Vagina (tissue), 2 donors: ENCODE measurements at regions of chr16 and their contacts with region 1.

Region 1: GRCh38 chr16:23435500-23435899 is 17.5 kb downstream of the COG7 start:
- DNase-seq: no peak
- H3K4me3 ChIP-seq: no peak overlapping the region
- H3K27ac ChIP-seq: no peak overlapping the region
- H3K4me1 ChIP-seq: peaks cover 8% of the 10 kb centered on the region
- H3K27me3 ChIP-seq: no peaks in the 10 kb centered on the region
- CTCF ChIP-seq: peak; percentile 42 to 66 (median 55)
- POLR2A ChIP-seq: no peak

Region 2: GRCh38 chr16:22898874-22899348 is 536.6 kb before region 1 on chr16:
- intact Hi-C with region 1: loop called (anchors 10 kb)
- DNase-seq: no peak
- H3K4me3 ChIP-seq: no peak overlapping the region
- H3K27ac ChIP-seq: no peak overlapping the region
- H3K4me1 ChIP-seq: no peaks in the 10 kb centered on the region
- H3K27me3 ChIP-seq: no peaks in the 10 kb centered on the region
- CTCF ChIP-seq: peak in 2 of 3 experiments; percentile 47 to 59
- POLR2A ChIP-seq: no peak

Region 3: DNA sequence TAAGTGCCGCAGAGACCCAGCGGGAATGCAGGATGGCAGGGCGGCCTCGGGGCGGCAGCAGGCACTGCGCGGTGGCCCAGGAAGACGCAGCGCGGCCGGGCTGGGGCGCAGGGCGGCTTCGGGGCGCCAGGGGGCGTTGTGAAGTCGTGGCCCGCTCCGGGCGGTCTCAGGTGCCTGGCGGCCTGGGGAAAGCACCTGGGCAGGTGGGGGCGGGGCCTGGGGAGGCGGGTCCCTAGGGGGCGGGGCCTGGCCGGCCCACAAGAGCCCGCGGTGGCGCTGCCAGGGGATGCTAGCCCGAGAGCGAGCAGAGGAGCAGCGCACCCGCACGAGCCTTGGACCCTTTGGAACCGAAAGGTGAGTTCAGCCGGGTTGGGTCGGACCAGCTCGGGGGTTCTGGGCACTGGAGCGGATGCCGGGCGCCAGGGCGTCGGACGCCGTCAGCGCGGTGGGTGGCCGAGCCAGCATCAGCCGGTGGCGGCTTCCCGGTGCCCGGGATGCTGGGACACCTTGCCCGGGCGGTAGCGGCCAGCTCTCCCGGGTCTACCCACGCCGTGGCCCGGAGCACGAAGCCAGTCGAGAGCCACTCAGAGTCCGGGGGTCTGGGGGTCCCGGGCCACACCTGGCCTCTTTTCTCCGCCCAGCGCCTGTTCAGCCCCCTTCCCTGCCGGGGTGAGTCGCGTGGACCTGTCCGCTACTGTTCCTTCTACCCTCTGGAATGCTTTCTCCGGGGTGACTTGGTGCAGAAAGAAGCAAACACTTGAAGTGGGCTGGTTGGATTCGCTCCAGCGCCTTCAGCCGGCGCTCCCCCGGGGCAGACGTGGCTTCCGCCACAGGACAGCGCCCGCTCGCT is 252.8 kb before region 1 on chr16 and contains the start of gene SCNN1G:
- intact Hi-C with region 1: loop called (anchors 5 kb)
- DNase-seq: no peak
- H3K4me3 ChIP-seq: peak within 1 kb of the TSS; percentile 51 to 58
- H3K27ac ChIP-seq: peak within 1 kb of the TSS; percentile 45
- H3K4me1 ChIP-seq: peaks cover 24% of the 10 kb centered on the region
- H3K27me3 ChIP-seq: peaks cover 8% of the 10 kb centered on the region
- CTCF ChIP-seq: peak; percentile 49 to 98 (median 79)
- POLR2A ChIP-seq: no peak
- total RNA-seq, gene SCNN1G: 26.5 TPM

Region 4: DNA sequence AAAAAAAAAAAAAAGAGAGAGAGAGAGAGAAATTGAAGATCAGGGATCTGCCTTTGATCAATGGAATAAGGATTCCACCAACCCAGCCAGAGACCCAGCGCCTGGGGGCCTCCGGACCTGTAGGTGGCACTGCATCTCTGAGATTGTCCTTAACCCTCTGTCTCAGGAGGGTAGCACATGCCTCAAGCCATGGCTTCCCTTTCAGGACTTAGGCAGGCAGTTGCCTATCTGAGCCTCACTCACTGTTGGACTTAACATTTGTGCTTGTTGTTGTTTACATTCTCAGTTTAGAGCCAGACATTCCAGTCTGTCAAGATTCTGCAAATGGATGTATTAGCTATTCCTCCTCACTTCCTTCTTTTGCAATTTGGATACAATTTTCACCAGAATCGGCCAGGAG is 138.5 kb before region 1 on chr16:
- intact Hi-C with region 1: loop called (anchors 5 kb)
- DNase-seq: no peak
- H3K4me3 ChIP-seq: no peak overlapping the region
- H3K27ac ChIP-seq: no peak overlapping the region
- H3K4me1 ChIP-seq: peaks cover 6% of the 10 kb centered on the region
- H3K27me3 ChIP-seq: no peaks in the 10 kb centered on the region
- CTCF ChIP-seq: no peak
- POLR2A ChIP-seq: no peak

Region 5: DNA sequence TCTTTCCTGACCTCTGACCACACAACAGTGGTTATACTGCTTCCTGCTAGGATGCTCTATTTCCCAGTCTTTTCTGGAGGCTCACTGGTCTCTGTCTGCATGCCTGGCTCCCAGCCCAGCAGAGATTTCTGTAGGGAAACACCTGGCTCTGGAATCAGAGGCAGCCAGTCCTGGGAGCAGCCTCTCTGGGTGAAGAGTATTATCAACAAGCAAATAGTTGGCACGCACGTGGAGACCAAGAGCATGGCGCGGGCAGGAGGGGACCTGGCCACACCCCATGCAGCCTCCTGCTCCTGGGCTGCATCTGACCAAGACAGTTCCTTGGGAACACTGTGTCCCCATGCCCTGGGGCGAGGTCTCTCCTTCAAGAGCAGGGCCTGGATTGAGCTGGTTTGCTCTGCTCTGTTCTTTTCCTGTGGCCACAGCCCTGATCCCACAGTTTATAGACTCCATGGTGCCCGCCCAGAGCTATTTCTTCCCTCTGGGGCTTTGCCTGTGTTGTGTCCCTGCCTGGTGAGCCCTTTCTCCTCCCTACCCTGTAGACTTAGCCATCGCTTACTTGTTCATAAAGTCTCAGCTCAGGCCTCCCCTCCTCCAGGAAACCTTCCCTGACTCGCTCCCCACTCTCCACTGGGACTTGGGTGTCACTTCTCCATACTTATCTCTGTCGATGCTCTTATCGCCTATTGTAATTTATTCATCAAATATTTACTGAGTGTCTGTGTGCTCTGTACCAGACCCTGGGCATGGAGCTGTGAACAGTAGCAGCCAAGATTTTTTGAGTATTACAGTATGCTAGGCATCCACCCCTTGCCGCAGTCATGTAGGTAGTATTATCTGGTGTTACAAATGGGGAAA is 72.8 kb before region 1 on chr16:
- intact Hi-C with region 1: no loop called
- DNase-seq: no peak
- H3K4me3 ChIP-seq: no peak overlapping the region
- H3K27ac ChIP-seq: peak overlapping the region; percentile 45
- H3K4me1 ChIP-seq: no peaks in the 10 kb centered on the region
- H3K27me3 ChIP-seq: no peaks in the 10 kb centered on the region
- CTCF ChIP-seq: no peak
- POLR2A ChIP-seq: no peak